Caco-2 (cell line): ENCODE measurements at regions of chr10 and their contacts with region 1.

Region 1: GRCh38 chr10:104121520-104122224 is at the start of gene SFR1:
- DNase-seq: peak; percentile 98 to 99
- H3K4me3 ChIP-seq: peak within 1 kb of the TSS; percentile 92
- H3K4me3 Mint-ChIP-seq: peak within 1 kb of the TSS; percentile 79
- H3K27ac Mint-ChIP-seq: peak within 1 kb of the TSS; percentile 96
- H3K4me1 ChIP-seq: peaks cover 13% of the 10 kb centered on the region; the same call in 1 of the 2 replicates
- H3K4me1 Mint-ChIP-seq: no peaks in the 10 kb centered on the region
- H3K27me3 ChIP-seq: no peaks in the 10 kb centered on the region
- H3K27me3 Mint-ChIP-seq: no peaks in the 10 kb centered on the region
- CTCF ChIP-seq: peak; percentile 60 to 62
- total RNA-seq, gene SFR1: 7.3 and 8.7 TPM in 2 replicates

Region 2: GRCh38 chr10:103966671-103967447 is 154.8 kb before region 1 on chr10 and contains the start of gene SLK:
- CTCF ChIA-PET with region 1: no interaction called
- POLR2A ChIA-PET with region 1: interaction called, 3 read pairs
- intact Hi-C with region 1: loop called (anchors 1 kb)
- DNase-seq: peak; percentile 76 to 89
- H3K4me3 ChIP-seq: peak within 1 kb of the TSS; percentile 95
- H3K4me3 Mint-ChIP-seq: peak within 1 kb of the TSS; percentile 86
- H3K27ac Mint-ChIP-seq: peak within 1 kb of the TSS; percentile 88
- H3K4me1 ChIP-seq: peaks cover 8% of the 10 kb centered on the region
- H3K4me1 Mint-ChIP-seq: peaks cover 9% of the 10 kb centered on the region
- H3K27me3 ChIP-seq: no peaks in the 10 kb centered on the region
- H3K27me3 Mint-ChIP-seq: no peaks in the 10 kb centered on the region
- CTCF ChIP-seq: no peak
- total RNA-seq, gene SLK: 35.6 and 39.5 TPM in 2 replicates

Region 3: GRCh38 chr10:104045151-104046089 is 76.3 kb before region 1 on chr10:
- CTCF ChIA-PET with region 1: interaction called, 6 read pairs
- POLR2A ChIA-PET with region 1: no interaction called
- intact Hi-C with region 1: loop called (anchors 1 kb)
- DNase-seq: peak; percentile 71 to 77
- H3K4me3 ChIP-seq: no peak overlapping the region
- H3K4me3 Mint-ChIP-seq: no peak overlapping the region
- H3K27ac Mint-ChIP-seq: peak overlapping the region; percentile 48
- H3K4me1 ChIP-seq: no peaks in the 10 kb centered on the region; the same call in 1 of the 2 replicates
- H3K4me1 Mint-ChIP-seq: no peaks in the 10 kb centered on the region
- H3K27me3 ChIP-seq: no peaks in the 10 kb centered on the region
- H3K27me3 Mint-ChIP-seq: no peaks in the 10 kb centered on the region
- CTCF ChIP-seq: peak; percentile 63 to 95

Region 4: DNA sequence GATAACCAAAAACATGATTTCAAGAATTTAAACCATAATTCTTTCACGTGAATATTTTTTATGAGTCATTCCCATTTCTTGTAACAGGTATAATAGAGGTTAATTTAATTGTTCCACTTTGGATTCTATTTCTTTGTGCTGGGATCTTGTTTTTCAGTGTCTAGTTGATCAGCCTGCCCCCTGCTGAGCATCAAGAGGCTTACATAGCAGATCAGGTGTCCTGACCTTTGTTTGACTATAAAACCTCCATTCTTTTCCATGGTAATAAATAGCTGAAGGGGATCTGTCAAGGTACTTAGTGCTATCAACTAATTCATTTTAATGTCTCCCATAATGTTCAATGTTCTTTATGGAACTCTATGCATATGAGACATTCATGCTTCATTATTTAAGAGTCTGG is 40.9 kb before region 1 on chr10:
- CTCF ChIA-PET with region 1: interaction called, 10 read pairs
- POLR2A ChIA-PET with region 1: no interaction called
- intact Hi-C with region 1: loop called (anchors 2 kb)
- DNase-seq: peak in 1 of 2 experiments; percentile 26
- H3K4me3 ChIP-seq: no peak overlapping the region
- H3K4me3 Mint-ChIP-seq: no peak overlapping the region
- H3K27ac Mint-ChIP-seq: no peak overlapping the region
- H3K4me1 ChIP-seq: peaks cover 7% of the 10 kb centered on the region
- H3K4me1 Mint-ChIP-seq: peaks cover 14% of the 10 kb centered on the region
- H3K27me3 ChIP-seq: no peaks in the 10 kb centered on the region
- H3K27me3 Mint-ChIP-seq: no peaks in the 10 kb centered on the region
- CTCF ChIP-seq: peak; percentile 53 to 65

Region 5: DNA sequence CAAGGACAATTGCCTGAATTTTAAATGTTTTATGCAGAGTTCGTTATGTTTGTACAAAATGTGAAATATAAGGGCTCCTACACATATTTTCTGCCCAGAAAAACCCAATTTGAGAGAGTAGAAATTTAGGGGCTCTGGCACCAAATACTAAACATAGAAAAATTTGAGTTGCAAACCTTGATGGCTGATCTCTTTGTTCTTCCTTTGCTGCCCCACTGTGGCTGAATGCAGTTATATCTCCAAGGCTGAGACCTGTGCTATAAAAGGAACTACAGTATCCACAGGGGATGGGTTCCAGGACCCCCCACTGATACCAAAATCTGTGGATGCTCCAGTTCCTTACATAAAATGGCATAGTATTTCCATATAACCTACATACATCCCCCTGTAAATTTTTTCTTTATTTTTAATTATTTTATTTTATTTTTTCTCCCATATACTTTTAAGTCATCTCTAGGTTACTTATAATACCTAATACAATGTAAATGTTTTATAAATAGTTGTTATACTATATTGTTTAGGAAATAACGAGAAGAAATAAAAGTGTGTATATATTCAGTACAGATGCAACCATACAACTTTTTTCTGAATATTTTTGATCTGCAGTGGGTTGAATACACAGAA is 88.0 kb after region 1 on chr10:
- CTCF ChIA-PET with region 1: no interaction called
- POLR2A ChIA-PET with region 1: no interaction called
- intact Hi-C with region 1: loop called (anchors 5 kb)
- DNase-seq: peak in 1 of 2 experiments; percentile 54
- H3K4me3 ChIP-seq: no peak overlapping the region
- H3K4me3 Mint-ChIP-seq: no peak overlapping the region
- H3K27ac Mint-ChIP-seq: no peak overlapping the region
- H3K4me1 ChIP-seq: no peaks in the 10 kb centered on the region
- H3K4me1 Mint-ChIP-seq: no peaks in the 10 kb centered on the region
- H3K27me3 ChIP-seq: no peaks in the 10 kb centered on the region
- H3K27me3 Mint-ChIP-seq: no peaks in the 10 kb centered on the region
- CTCF ChIP-seq: peak; percentile 75 to 76

Region 6: GRCh38 chr10:104268716-104269645 is 147.3 kb after region 1 on chr10 and contains the start of gene GSTO2:
- CTCF ChIA-PET with region 1: interaction called, 7 read pairs
- POLR2A ChIA-PET with region 1: interaction called, 11 read pairs
- intact Hi-C with region 1: no loop called
- DNase-seq: peak; percentile 99
- H3K4me3 ChIP-seq: peak within 1 kb of the TSS; percentile 86
- H3K4me3 Mint-ChIP-seq: peak within 1 kb of the TSS; percentile 74
- H3K27ac Mint-ChIP-seq: peak within 1 kb of the TSS; percentile 60
- H3K4me1 ChIP-seq: peaks cover 19% of the 10 kb centered on the region
- H3K4me1 Mint-ChIP-seq: peaks cover 9% of the 10 kb centered on the region
- H3K27me3 ChIP-seq: no peaks in the 10 kb centered on the region
- H3K27me3 Mint-ChIP-seq: no peaks in the 10 kb centered on the region
- CTCF ChIP-seq: no peak
- total RNA-seq, gene GSTO2: 1.1 and 1.4 TPM in 2 replicates